ENCODE measurements at regions of chr2 and their contacts with region 1.

Region 1: GRCh38 chr2:174771631-174772471 is 7.6 kb upstream of the CHRNA1 start:
- DNase-seq: peak; percentile 77
- H3K4me3 ChIP-seq: peak overlapping the region; percentile 37
- H3K27ac ChIP-seq: no peak overlapping the region
- H3K4me1 ChIP-seq: peaks cover 13% of the 10 kb centered on the region
- H3K27me3 ChIP-seq: no peaks in the 10 kb centered on the region
- CTCF ChIP-seq: peak; percentile 91

Region 2: DNA sequence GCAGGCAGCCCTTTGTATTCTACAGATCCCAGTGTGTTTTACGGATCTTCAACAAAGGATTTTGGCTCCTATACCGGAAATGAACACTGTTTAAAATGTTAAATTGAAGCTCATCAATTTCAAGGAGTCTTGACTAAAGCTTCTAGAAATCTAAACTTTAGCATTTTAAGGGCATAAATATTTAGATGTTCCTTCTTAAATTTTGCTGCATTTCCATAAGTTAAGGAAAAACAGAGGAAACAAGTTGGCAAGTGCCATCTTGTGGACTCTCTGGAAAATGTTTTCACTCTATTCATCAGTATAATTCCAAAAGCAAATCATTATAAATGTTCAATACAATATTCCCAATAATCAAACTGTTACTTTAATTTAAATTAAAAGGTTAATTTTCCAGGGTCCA is 213.8 kb after region 1 on chr2:
- intact Hi-C with region 1: loop called (anchors 5 kb)
- DNase-seq: no peak
- H3K4me3 ChIP-seq: no peak overlapping the region
- H3K27ac ChIP-seq: no peak overlapping the region
- H3K4me1 ChIP-seq: peaks cover 4% of the 10 kb centered on the region
- H3K27me3 ChIP-seq: no peaks in the 10 kb centered on the region
- CTCF ChIP-seq: peak; percentile 67

Measured in left ventricle myocardium inferior (tissue), 1 donor.